SK-N-SH (cell line): ENCODE measurements at regions of chr11 and their contacts with region 1.

Region 1: GRCh38 chr11:31641477-31642062 is 132.0 kb downstream of the ELP4 start:
- DNase-seq: peak; percentile 5
- H3K4me3 ChIP-seq: no peak overlapping the region
- H3K27ac ChIP-seq: no peak overlapping the region
- H3K4me1 ChIP-seq: peaks cover 0 to 21% of the 10 kb centered on the region in 2 experiments; a peak in 3 of 4 replicates
- H3K27me3 ChIP-seq: no peaks in the 10 kb centered on the region
- CTCF ChIP-seq: peak; percentile 75
- EP300 ChIP-seq: no peak
- RAD21 ChIP-seq: peak; percentile 58

Region 2: GRCh38 chr11:31535479-31535878 is 106.1 kb before region 1 on chr11:
- CTCF ChIA-PET with region 1: no interaction called
- POLR2A ChIA-PET with region 1: no interaction called
- DNase-seq: no peak
- H3K4me3 ChIP-seq: no peak overlapping the region
- H3K27ac ChIP-seq: no peak overlapping the region
- H3K4me1 ChIP-seq: no peaks in the 10 kb centered on the region
- H3K27me3 ChIP-seq: no peaks in the 10 kb centered on the region
- CTCF ChIP-seq: no peak
- EP300 ChIP-seq: no peak
- RAD21 ChIP-seq: no peak

Region 3: DNA sequence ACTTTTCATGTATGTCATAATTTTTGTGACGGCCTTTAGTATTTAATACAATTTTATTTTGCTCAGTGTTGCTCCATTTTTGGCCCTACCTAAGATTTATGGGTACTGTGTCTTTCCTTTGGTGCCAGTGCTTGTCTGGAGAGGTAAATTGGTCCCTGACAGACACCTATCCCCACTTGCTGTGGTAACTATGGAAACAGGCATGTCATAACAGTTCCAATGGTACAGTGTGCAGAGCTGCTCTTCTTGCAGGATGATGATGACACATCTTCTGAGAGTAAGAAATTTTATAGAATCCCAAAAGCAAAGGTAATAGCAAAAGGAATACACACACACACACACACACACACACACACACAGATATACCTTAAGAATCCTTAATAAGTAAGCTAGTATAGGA is 13.5 kb before region 1 on chr11:
- CTCF ChIA-PET with region 1: interaction called, 20 read pairs
- POLR2A ChIA-PET with region 1: no interaction called
- DNase-seq: no peak
- H3K4me3 ChIP-seq: no peak overlapping the region
- H3K27ac ChIP-seq: no peak overlapping the region
- H3K4me1 ChIP-seq: no peaks in the 10 kb centered on the region
- H3K27me3 ChIP-seq: no peaks in the 10 kb centered on the region
- CTCF ChIP-seq: no peak
- EP300 ChIP-seq: no peak
- RAD21 ChIP-seq: no peak

Region 4: DNA sequence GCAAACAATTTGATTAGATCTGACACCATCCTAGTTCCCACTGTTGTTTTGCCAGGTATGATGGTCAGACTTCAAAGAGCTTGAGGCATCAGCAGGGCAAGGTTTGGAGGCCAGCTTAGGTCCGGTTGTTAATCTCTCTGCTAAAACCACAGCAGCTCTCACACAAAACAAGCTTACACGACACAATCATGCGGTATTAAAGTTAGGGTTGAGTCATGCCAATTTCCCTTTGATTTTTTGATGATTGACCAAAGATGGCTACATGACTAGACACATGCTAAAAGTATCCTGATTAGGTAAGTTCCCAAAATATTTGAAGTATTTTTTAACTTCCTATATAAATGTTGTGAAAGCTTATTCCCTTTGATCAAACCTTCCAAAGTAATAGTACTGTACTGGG is 13.9 kb after region 1 on chr11:
- CTCF ChIA-PET with region 1: interaction called, 20 read pairs
- POLR2A ChIA-PET with region 1: no interaction called
- DNase-seq: no peak
- H3K4me3 ChIP-seq: no peak overlapping the region
- H3K27ac ChIP-seq: no peak overlapping the region
- H3K4me1 ChIP-seq: peaks cover 0 to 6% of the 10 kb centered on the region in 2 experiments; a peak in 1 of 4 replicates
- H3K27me3 ChIP-seq: no peaks in the 10 kb centered on the region
- CTCF ChIP-seq: no peak
- EP300 ChIP-seq: no peak
- RAD21 ChIP-seq: no peak

Region 5: DNA sequence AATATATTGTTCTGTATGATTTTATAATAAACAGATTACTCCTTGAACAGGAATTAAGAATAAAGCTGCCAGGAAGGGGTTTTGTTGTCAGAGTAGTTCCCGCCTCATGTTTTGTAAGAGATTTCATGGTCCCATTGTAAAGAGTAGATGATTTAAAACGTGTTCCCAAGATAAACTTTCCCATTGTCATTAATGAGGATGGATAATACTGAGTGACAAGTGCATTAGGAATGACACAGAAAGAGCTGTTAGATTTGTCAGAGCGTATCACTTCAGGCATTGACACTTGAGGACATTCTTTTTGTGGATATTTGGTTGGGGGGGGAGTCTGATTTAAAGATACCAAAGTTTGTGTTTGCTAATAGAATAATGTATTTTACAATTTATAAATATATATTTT is 22.6 kb after region 1 on chr11:
- CTCF ChIA-PET with region 1: interaction called, 21 read pairs
- POLR2A ChIA-PET with region 1: no interaction called
- DNase-seq: no peak
- H3K4me3 ChIP-seq: no peak overlapping the region
- H3K27ac ChIP-seq: no peak overlapping the region
- H3K4me1 ChIP-seq: no peaks in the 10 kb centered on the region; a peak in 1 of 4 replicates
- H3K27me3 ChIP-seq: no peaks in the 10 kb centered on the region
- CTCF ChIP-seq: no peak
- EP300 ChIP-seq: no peak
- RAD21 ChIP-seq: no peak